Activated T-helper 1 cell treated with anti-CD3 and anti-CD28 coated beads, Interleukin-12 subunit alpha, Interleukin-12 subunit beta, Interleukin-2, Interleukin-4 antibody, amounts not matched to agents 30 ng/mL and 10 ng/mL and 1 ng/mL, durations not matched to agents 14 hours and 24 hours and 36 hours (primary cell): ENCODE measurements at regions of chr21 and their contacts with region 1.

Region 1: GRCh38 chr21:36156339-36156814 is 247 bp upstream of the DOP1B start:
- DNase-seq: peak; percentile 99
- H3K4me3 Mint-ChIP-seq: peak overlapping the region; percentile 86
- H3K27ac Mint-ChIP-seq: peak overlapping the region; percentile 9
- H3K4me1 Mint-ChIP-seq: peaks cover 10% of the 10 kb centered on the region
- H3K27me3 Mint-ChIP-seq: peaks cover 9% of the 10 kb centered on the region

Region 2: GRCh38 chr21:36113647-36114428 is 42.5 kb before region 1 on chr21:
- intact Hi-C with region 1: loop called (anchors 1 kb)
- DNase-seq: peak; percentile 36
- H3K4me3 Mint-ChIP-seq: peak overlapping the region; percentile 84
- H3K27ac Mint-ChIP-seq: peak overlapping the region; percentile 89
- H3K4me1 Mint-ChIP-seq: peaks cover 16% of the 10 kb centered on the region
- H3K27me3 Mint-ChIP-seq: peaks cover 10% of the 10 kb centered on the region

Region 3: DNA sequence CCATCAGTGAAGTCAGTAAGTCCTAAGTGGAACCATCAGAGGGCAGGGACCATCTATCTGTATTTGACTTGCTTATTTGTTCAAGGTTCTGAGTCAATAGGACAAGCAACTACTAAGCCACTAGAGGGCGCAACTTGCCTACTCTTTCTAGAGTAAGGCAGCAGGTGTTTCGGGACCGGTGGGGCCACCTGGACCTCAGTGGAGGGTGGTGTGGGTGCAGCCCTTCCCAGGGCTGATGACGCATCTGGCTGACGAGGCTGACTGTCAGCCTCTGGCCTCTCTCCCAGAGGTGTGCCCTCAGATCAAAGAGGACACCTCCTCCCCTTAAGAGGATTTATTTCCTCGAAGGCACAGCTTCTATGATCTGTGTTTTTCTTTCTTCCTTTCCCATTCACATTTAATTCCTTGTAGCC is 14.9 kb before region 1 on chr21:
- intact Hi-C with region 1: loop called (anchors 1 kb)
- DNase-seq: peak; percentile 76
- H3K4me3 Mint-ChIP-seq: no peak overlapping the region
- H3K27ac Mint-ChIP-seq: no peak overlapping the region
- H3K4me1 Mint-ChIP-seq: peaks cover 15% of the 10 kb centered on the region
- H3K27me3 Mint-ChIP-seq: no peaks in the 10 kb centered on the region

Region 4: GRCh38 chr21:36188081-36188681 is 31.8 kb after region 1 on chr21:
- intact Hi-C with region 1: no loop called
- DNase-seq: no peak
- H3K4me3 Mint-ChIP-seq: no peak overlapping the region
- H3K27ac Mint-ChIP-seq: no peak overlapping the region
- H3K4me1 Mint-ChIP-seq: peaks cover 22% of the 10 kb centered on the region
- H3K27me3 Mint-ChIP-seq: no peaks in the 10 kb centered on the region

Region 5: GRCh38 chr21:36203617-36203917 is 47.2 kb after region 1 on chr21:
- intact Hi-C with region 1: loop called (anchors 1 kb)
- DNase-seq: no peak
- H3K4me3 Mint-ChIP-seq: no peak overlapping the region
- H3K27ac Mint-ChIP-seq: peak overlapping the region; percentile 49
- H3K4me1 Mint-ChIP-seq: peaks cover 26% of the 10 kb centered on the region
- H3K27me3 Mint-ChIP-seq: peaks cover 2% of the 10 kb centered on the region

Region 6: GRCh38 chr21:36218691-36219090 is 62.3 kb after region 1 on chr21:
- intact Hi-C with region 1: no loop called
- DNase-seq: no peak
- H3K4me3 Mint-ChIP-seq: no peak overlapping the region
- H3K27ac Mint-ChIP-seq: no peak overlapping the region
- H3K4me1 Mint-ChIP-seq: no peaks in the 10 kb centered on the region
- H3K27me3 Mint-ChIP-seq: no peaks in the 10 kb centered on the region

Region 7: DNA sequence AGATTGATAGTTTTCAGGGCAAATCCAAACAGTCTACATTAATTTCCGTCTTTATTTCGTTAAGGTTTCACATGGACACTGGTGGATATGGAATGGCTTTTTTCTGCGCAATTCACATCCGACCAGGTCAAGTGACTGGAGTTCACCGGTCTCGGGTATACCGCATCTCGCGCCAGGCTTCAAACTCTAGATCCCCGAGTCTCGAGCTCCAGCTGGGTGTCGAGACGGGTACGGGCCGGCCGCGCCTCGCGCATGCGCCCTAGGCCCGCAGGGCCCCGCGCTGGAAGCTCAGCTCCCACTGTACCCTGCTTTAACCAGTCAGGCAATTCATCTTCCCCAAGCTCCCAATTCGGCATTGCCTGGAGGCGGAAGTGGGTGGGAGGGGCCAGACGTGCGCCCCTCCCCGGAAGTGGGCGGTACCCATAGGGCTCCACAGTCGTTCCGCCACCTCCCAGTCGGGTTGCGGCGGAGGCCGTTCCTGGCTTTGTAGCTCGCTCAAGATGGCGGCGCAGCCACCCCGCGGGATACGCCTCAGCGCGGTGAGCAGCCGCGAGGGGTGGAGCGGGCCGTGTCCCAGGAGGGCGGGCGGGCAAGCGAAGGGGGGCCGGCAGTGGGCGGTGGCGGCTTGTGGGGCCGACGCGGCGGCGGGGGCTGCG is 163.5 kb after region 1 on chr21 and contains the start of gene MORC3:
- intact Hi-C with region 1: loop called (anchors 1 kb)
- DNase-seq: peak; percentile 97
- H3K4me3 Mint-ChIP-seq: peak within 1 kb of the TSS; percentile 93
- H3K27ac Mint-ChIP-seq: peak within 1 kb of the TSS; percentile 95
- H3K4me1 Mint-ChIP-seq: peaks cover 29% of the 10 kb centered on the region
- H3K27me3 Mint-ChIP-seq: peaks cover 4% of the 10 kb centered on the region
- total RNA-seq, gene MORC3: 22.1 and 23.5 TPM in 2 replicates

Region 8: GRCh38 chr21:36385233-36386030 is 229.1 kb after region 1 on chr21 and contains the start of gene CHAF1B:
- intact Hi-C with region 1: loop called (anchors 1 kb)
- DNase-seq: peak; percentile 80
- H3K4me3 Mint-ChIP-seq: peak within 1 kb of the TSS; percentile 89
- H3K27ac Mint-ChIP-seq: peak within 1 kb of the TSS; percentile 65
- H3K4me1 Mint-ChIP-seq: peaks cover 25% of the 10 kb centered on the region
- H3K27me3 Mint-ChIP-seq: no peaks in the 10 kb centered on the region
- total RNA-seq, gene CHAF1B: 33.8 and 35.7 TPM in 2 replicates

Region 9: DNA sequence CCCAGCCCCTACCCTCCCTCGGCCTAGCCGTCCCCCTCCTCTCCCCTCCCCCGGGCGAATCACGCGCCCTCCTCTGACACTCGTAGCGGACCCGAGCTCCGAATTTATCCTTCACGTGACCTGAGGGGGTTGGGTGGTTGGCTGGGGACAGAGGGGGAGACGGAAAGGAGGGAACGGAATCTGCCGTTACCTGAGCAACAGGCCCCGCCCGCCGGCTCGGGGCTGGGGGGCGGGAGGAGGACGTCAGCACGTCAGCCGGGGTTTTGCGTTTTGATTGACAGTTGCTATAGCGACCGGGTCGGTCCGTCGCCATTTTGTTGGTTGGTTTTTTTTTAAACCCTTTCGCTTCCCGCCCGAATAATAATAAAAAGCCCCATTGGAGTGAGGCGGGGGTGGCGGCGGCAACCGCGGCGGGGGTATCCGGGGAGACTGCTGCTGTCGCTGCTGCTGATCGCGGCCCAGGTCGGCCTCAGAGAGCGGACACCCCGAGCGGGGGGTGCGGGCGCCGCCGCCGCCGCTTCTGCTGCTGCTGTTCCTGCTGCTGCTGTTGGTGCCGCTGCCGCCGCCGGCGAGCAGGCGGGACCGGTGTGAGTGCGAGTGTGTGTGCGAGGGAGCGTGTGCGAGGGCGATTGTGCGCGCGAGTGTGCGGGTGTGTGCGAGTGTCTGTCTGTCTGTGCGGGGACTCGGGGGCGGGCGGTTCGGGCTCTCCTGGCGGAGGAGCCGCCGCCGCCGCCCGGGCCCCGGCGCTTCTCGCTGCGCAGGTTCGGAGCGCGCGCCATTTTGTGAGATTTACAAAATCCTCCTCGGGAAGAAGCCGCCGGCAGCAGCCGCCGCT is 1210.3 kb after region 1 on chr21 and contains the start of gene DYRK1A:
- intact Hi-C with region 1: loop called (anchors 5 kb)
- DNase-seq: peak; percentile 97
- H3K4me3 Mint-ChIP-seq: peak within 1 kb of the TSS; percentile 98
- H3K27ac Mint-ChIP-seq: peak within 1 kb of the TSS; percentile 99
- H3K4me1 Mint-ChIP-seq: peaks cover 44% of the 10 kb centered on the region
- H3K27me3 Mint-ChIP-seq: peaks cover 2% of the 10 kb centered on the region
- total RNA-seq, gene DYRK1A: 66.5 and 68.1 TPM in 2 replicates